GM12878 (cell line): ENCODE measurements at regions of chr1 and their contacts with region 1.

Region 1: GRCh38 chr1:40668769-40669525 is 3.5 kb upstream of the RIMS3 start:
- DNase-seq: peak; percentile 43
- ATAC-seq: peak; percentile 83
- H3K4me3 ChIP-seq: peak overlapping the region; percentile 59; the same call in 1 of the 2 replicates
- H3K27ac ChIP-seq: no peak overlapping the region
- H3K4me1 ChIP-seq: peaks cover 7% of the 10 kb centered on the region
- H3K27me3 ChIP-seq: no peaks in the 10 kb centered on the region
- CTCF ChIP-seq: peak; percentile 91
- EP300 ChIP-seq: 0 out of 4 replicates have a peak, but pooled peaks of 1 of the 2 experiments have one; percentile 34
- POLR2A ChIP-seq: no peak
- RAD21 ChIP-seq: peak; percentile 73

Region 2: GRCh38 chr1:40612345-40612831 is 56.6 kb before region 1 on chr1:
- CTCF ChIA-PET with region 1: interaction called, 8 read pairs
- POLR2A ChIA-PET with region 1: interaction called, 4 read pairs
- RAD21 ChIA-PET with region 1: interaction called, 3 read pairs
- SMC1A ChIA-PET with region 1: interaction called, 3 read pairs
- in situ Hi-C with region 1: no loop called
- intact Hi-C with region 1: loop called (anchors 1 kb)
- DNase-seq: peak; percentile 46
- ATAC-seq: peak; percentile 100
- H3K4me3 ChIP-seq: no peak overlapping the region
- H3K27ac ChIP-seq: no peak overlapping the region
- H3K4me1 ChIP-seq: 0 out of 2 replicates have a peak, but pooled peaks cover 3% of the 10 kb centered on the region
- H3K27me3 ChIP-seq: no peaks in the 10 kb centered on the region
- CTCF ChIP-seq: peak; percentile 91 to 97 (median 93)
- EP300 ChIP-seq: no peak
- POLR2A ChIP-seq: no peak
- RAD21 ChIP-seq: peak; percentile 96

Region 3: DNA sequence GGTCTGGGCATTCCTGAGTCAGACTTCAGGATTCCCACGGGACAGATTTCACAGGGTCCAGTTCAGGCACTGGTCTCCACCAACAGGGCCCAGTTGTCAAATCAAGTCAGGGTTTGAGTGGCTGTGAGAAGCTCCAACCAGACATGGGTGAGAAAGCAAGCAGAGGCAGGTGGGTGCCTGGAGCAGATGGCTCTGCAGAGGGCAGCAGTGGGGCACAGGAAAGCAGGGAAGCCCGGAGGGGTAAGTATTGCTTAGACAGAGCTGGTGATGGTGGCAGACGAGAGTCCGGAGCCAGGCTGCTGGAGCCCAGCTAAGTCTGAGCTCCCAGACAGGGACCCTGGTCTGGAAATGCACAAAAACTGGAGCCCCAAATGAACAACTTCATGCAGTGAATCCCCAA is 43.9 kb before region 1 on chr1:
- CTCF ChIA-PET with region 1: interaction called, 21 read pairs
- POLR2A ChIA-PET with region 1: interaction called, 6 read pairs
- RAD21 ChIA-PET with region 1: interaction called, 6 read pairs
- SMC1A ChIA-PET with region 1: interaction called, 7 read pairs
- in situ Hi-C with region 1: no loop called
- intact Hi-C with region 1: loop called (anchors 5 kb)
- DNase-seq: no peak
- ATAC-seq: peak; percentile 35
- H3K4me3 ChIP-seq: no peak overlapping the region
- H3K27ac ChIP-seq: no peak overlapping the region
- H3K4me1 ChIP-seq: peaks cover 15% of the 10 kb centered on the region
- H3K27me3 ChIP-seq: no peaks in the 10 kb centered on the region
- CTCF ChIP-seq: peak in 2 of 3 experiments; percentile 44 to 45; a peak in 3 of 6 replicates
- EP300 ChIP-seq: no peak
- POLR2A ChIP-seq: no peak
- RAD21 ChIP-seq: peak; percentile 20; the same call in 1 of the 2 replicates

Region 4: DNA sequence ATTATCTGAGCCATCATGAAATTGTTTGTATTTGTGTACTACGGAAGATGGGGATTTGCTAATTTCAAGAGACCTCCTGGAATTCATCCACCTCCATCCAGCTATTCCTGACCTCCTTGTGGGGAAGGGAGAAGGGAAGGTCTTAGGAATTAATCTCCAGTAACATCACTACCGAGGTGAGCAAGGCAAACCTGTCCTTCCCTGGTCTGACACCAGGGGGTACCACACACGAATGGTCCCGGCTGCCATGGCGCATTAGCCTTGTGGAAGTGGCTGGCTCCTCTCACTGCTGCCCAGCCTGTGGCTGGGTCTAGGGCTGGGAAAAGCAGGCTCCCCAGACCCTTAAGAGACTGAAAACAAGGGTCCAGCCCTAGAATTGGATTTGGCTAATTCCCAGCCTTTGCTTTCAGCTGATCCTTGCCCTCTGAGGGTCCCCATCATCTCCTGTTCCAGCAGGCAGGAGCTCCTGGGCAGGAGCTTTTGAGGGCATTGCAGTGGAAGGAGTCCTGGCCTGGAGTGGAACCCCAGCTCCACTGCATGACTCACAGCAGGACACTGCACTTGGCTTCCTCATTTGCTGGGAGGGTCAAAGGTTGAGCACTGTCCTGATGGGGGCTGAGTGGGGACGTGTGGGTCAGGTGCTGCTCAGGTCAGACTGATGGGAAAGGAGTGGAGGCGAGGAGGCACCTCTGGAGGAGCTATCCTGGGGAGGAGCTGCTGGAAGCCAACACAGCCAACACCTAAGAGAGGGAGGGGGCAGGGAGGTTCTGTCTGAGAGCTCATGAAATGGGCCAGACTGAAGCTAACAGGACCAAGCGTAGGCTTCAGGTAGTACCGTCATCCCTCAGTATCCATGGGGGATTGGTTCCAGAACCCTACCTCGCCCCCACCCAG is 38.2 kb before region 1 on chr1:
- CTCF ChIA-PET with region 1: interaction called, 21 read pairs
- POLR2A ChIA-PET with region 1: interaction called, 6 read pairs
- RAD21 ChIA-PET with region 1: interaction called, 6 read pairs
- SMC1A ChIA-PET with region 1: interaction called, 5 read pairs
- in situ Hi-C with region 1: no loop called
- intact Hi-C with region 1: loop called (anchors 5 kb)
- DNase-seq: no peak
- ATAC-seq: peak; percentile 36
- H3K4me3 ChIP-seq: no peak overlapping the region
- H3K27ac ChIP-seq: no peak overlapping the region
- H3K4me1 ChIP-seq: peaks cover 15% of the 10 kb centered on the region
- H3K27me3 ChIP-seq: no peaks in the 10 kb centered on the region
- CTCF ChIP-seq: peak; percentile 41 to 51 (median 48); a peak in 5 of 6 replicates
- EP300 ChIP-seq: no peak
- POLR2A ChIP-seq: no peak
- RAD21 ChIP-seq: peak; percentile 43; the same call in 1 of the 2 replicates

Region 5: DNA sequence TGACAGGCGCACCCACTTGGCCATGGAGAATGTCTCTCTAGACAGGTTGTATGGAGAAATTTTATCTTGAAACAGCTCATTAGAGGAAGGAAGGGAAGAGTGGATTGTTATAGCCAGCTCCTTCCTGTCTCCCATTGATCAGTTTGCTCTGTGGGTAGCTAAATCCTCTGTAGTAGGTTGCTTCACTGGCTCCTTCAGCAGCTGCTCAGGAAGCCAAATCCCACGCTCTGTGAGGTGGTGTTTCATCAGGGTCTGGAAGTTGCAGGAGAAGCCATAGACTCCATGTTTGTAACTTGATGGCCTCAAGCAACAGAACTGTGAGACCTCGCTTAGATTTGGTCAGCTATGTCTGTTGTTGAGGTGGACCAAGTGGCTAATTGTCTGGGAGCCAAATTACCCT is 15.7 kb after region 1 on chr1:
- CTCF ChIA-PET with region 1: interaction called, 13 read pairs
- POLR2A ChIA-PET with region 1: interaction called, 9 read pairs
- RAD21 ChIA-PET with region 1: interaction called, 3 read pairs
- SMC1A ChIA-PET with region 1: interaction called, 72 read pairs
- in situ Hi-C with region 1: no loop called
- intact Hi-C with region 1: no loop called
- DNase-seq: no peak
- ATAC-seq: no peak
- H3K4me3 ChIP-seq: no peak overlapping the region
- H3K27ac ChIP-seq: no peak overlapping the region
- H3K4me1 ChIP-seq: no peaks in the 10 kb centered on the region
- H3K27me3 ChIP-seq: no peaks in the 10 kb centered on the region
- CTCF ChIP-seq: no peak
- EP300 ChIP-seq: no peak
- POLR2A ChIP-seq: no peak
- RAD21 ChIP-seq: no peak

Region 6: DNA sequence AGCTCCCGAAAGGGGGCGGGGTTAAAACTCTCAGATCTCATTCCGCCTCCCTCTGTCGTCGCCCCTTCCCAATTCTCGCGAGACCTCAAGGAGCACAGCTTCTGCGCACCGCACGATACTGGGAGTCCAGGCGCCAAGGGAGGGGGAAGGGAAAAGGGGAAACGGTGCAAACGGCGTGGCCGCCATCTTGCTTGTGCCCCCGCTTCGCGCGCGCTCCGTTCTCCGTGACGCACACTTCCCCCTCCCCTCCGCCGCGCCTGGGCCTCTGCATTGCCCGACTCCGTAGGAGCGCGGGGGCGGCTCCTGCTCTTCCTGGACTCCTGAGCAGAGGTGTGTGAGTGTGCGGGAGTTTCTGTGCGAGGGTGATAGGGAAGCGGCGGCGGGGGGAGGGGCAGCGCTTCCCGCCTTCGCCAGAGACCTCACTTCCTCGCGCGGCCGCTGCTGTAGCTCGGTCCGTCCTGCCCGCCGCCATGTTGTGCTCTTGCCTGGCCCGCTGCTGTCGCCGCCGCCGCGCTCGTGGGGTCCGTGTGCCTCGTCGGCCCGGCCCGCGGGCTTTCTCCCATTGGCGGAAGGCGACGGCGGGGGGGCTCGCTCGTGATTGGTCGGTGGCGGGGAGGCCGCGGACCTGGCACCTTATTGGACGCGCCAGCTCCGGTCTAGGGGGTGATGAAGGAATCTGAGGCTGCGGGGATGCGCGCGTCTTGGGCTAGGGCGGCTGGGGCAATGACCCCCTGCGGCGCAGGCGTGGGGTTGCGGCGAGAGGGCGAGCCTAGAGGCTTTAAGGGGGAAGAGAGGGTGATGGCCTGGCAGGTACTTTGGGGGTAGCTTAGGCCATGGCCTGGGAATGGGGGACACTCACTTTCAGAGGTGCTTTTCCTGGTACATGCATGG is 22.8 kb after region 1 on chr1 and contains the start of gene NFYC:
- CTCF ChIA-PET with region 1: interaction called, 13 read pairs
- POLR2A ChIA-PET with region 1: interaction called, 9 read pairs
- RAD21 ChIA-PET with region 1: interaction called, 12 read pairs
- SMC1A ChIA-PET with region 1: interaction called, 72 read pairs
- in situ Hi-C with region 1: no loop called
- intact Hi-C with region 1: no loop called
- DNase-seq: peak; percentile 94
- ATAC-seq: peak; percentile 94
- H3K4me3 ChIP-seq: peak within 1 kb of the TSS; percentile 95
- H3K27ac ChIP-seq: peak within 1 kb of the TSS; percentile 98
- H3K4me1 ChIP-seq: peaks cover 32% of the 10 kb centered on the region
- H3K27me3 ChIP-seq: no peaks in the 10 kb centered on the region
- CTCF ChIP-seq: peak in 1 of 3 experiments; percentile 10; a peak in 1 of 6 replicates
- EP300 ChIP-seq: peak in 1 of 2 experiments; percentile 45; a peak in 2 of 4 replicates
- POLR2A ChIP-seq: peak; percentile 99
- RAD21 ChIP-seq: no peak
- polyA plus RNA-seq, gene NFYC: 4.3 to 6.9 TPM

Region 7: DNA sequence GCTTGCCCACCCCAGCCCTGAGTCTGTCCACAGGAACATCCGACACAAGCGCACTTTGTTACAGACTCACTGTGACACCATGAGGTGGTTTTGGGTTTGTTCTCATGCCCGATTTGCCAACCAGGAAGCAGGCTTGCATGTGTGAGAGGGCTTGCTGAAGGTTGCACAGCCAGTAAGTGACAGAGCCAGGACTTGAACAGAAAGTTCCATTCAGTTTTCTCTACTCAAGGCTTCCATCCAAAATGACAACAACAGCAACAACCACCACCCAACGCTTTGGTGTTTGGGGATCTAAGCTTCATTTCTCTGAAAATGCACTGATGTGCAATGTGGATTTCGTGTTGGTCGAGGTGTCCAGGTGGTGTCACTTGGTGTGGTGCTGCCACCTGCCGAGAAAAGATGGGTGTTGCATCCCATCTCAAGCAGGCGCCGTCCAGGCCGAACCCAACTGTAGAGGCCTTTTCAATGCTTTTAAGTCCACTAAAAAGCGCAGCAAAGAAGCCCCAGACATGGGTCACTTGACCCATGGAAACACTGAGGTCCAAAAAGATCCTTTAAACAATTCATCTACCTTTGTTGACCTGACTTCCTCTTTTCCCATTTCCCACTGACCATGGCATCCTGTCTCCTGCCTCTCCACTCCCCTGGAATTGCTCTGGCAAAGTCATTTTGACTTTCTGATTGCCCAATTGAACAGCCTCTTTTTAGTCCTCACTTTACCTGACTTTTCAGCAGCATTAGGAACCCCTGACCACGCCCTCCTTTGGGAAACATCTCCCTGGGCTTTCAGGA is 181.1 kb after region 1 on chr1:
- CTCF ChIA-PET with region 1: interaction called, 5 read pairs
- POLR2A ChIA-PET with region 1: interaction called, 4 read pairs
- RAD21 ChIA-PET with region 1: interaction called, 6 read pairs
- SMC1A ChIA-PET with region 1: interaction called, 4 read pairs
- in situ Hi-C with region 1: no loop called
- intact Hi-C with region 1: loop called (anchors 5 kb)
- DNase-seq: peak; percentile 62
- ATAC-seq: peak; percentile 92
- H3K4me3 ChIP-seq: no peak overlapping the region
- H3K27ac ChIP-seq: no peak overlapping the region
- H3K4me1 ChIP-seq: peaks cover 12% of the 10 kb centered on the region
- H3K27me3 ChIP-seq: no peaks in the 10 kb centered on the region; a peak in 1 of 4 replicates
- CTCF ChIP-seq: peak; percentile 82 to 94 (median 86)
- EP300 ChIP-seq: no peak
- POLR2A ChIP-seq: no peak
- RAD21 ChIP-seq: peak; percentile 91